Ascending aorta (tissue), 2 donors: ENCODE measurements at regions of chr1 and their contacts with region 1.

Region 1: DNA sequence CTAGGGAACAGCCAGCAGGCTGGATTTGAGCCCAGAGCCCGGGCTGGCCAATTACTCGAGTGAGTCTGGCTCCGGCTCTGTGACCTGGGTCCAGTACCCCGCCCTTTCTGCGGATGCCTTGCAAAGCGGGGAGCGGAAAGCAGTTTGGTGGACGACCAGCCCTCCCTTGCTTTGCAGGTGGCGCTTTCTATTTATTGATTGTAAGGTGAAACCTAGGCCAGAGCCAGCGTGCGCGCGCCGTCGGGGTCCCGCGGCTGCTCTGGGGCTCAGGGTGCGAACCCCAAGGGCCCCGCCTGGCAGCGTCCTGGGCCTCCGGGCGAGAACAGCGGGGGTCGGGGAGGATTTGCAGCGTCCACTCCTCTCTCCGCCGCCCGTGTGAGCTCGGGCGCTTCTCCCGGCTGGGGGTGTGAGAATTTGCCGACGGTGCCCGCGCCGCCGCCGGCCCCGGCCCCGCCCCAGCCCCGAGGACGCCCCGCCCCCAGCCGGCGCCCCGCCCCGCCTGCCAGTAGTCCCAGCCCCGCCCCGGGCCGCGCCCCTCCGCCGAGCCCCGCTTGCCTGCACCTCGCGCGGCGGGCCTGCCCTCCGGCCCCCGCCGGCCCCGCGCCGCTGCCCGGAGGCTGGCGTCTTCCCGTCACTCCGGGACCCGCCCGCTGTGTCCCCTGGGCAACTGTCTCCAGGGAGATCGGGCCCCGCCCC is 37.6 kb downstream of the PIK3CD start:
- DNase-seq: peak in 1 of 2 donors; percentile 89
- H3K4me3 ChIP-seq: peak overlapping the region; percentile 54 to 97
- H3K27ac ChIP-seq: peak overlapping the region; percentile 63 to 74
- H3K4me1 ChIP-seq: peaks cover 7 to 15% of the 10 kb centered on the region in 2 donors
- H3K27me3 ChIP-seq: no peaks in the 10 kb centered on the region
- CTCF ChIP-seq: no peak

Region 2: DNA sequence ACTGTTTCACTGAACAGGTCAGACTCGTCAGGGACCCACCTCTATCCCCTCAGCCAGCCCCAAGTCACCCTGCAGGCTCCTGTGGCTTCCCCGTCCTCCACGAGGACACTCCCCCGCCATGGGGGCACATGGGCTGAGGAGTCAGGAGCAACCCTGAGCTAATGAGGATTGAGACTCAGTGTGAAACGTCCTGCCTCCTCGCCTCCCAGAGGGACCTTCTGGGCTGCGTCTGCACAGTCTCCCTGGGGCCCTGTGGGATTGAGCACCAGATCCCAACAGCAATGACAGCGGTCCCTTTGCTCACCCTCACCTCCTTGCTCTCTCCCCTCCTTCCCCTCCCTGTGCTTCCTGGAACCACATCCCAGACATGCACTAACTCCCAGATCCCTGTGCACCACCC is 168.7 kb before region 1 on chr1:
- intact Hi-C with region 1: no loop called
- DNase-seq: no peak
- H3K4me3 ChIP-seq: no peak overlapping the region
- H3K27ac ChIP-seq: no peak overlapping the region
- H3K4me1 ChIP-seq: no peaks in the 10 kb centered on the region
- H3K27me3 ChIP-seq: no peaks in the 10 kb centered on the region
- CTCF ChIP-seq: no peak

Region 3: DNA sequence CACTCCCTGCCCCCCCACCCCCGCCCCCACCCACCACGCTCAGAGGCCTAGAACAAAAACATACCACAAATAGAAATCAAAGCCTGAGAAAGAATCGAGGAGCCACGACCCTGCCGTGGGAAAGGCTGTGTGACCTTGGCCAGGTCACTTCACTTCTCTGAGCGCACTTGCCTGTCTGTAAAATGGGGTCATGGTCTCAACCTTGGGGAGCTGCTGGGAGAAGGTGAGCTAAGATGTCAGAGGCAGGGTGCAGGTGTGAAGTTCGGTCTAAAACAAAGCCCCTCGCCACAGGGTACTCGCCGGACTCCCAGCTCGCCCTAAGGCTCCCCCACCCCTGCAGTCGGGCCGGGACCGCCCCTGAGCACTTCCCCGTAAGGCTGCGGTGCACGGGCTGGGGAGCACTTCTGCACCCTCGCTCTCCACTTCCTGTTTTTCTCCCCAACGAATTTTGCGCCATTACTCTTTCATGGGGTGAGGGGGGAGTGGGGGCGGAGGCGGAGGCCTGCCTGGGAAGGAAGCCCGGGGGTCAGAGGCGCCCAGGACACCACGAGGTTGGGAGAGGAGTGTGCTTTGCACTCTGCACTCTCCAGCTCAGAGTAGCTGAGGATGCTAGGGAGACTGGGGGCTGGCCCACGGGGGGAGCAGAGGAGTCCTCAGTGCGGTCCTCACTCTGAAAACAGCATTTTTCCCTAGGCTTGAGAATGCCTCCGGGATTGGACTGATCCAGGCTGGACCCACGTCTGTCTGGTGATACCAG is 59.5 kb before region 1 on chr1:
- intact Hi-C with region 1: loop called (anchors 5 kb)
- DNase-seq: peak; percentile 25 to 74
- H3K4me3 ChIP-seq: peak overlapping the region in 1 of 2 donors; percentile 15
- H3K27ac ChIP-seq: no peak overlapping the region
- H3K4me1 ChIP-seq: no peaks in the 10 kb centered on the region
- H3K27me3 ChIP-seq: no peaks in the 10 kb centered on the region
- CTCF ChIP-seq: no peak